Posterior cingulate gyrus (tissue), 11 donors: ENCODE measurements at regions of chr2 and their contacts with region 1.

Region 1: DNA sequence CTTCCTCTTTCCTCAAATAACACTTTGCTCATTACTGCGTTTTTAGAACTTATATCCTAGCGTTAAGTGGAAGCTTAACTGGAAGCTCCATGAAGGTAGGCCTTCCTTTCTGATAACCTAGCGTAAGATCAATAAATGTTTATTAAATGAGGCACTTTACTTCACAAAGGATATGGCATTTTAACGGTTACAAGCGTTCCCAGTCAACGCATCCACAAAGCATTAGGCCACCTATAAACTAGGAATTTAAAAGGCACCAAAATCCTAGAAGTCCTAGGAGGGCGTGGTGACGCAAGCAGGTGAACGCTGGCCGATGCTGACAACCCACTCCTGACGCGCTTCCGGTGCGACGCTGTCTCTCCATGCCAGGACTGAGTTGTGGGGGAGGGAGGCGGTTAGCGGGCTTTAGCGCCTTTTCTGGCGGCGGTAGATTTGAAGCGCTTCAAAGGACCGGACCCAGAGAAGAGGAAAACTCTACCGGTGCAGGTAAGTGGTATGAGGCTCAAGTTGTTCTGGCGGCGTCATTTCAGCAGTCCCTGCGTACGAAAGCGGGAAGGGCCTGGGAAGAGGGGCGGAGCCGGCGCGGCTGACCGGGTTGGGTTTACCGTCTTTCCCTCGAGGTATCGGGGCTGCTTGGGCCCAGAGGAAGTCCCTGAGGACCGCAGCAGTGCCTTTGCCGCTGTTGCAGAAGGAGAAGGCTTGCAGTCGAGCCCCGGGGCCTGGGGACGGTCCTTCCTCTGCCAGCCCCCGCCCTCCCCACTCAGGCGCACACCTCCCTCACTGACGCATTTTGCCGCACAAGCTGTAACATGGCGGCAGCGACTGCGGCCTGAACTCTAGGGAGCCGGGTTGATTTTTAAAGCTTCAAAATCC is at the start of gene PPIG:
- DNase-seq: peak; percentile 81 to 98 (median 88)

Region 2: GRCh38 chr2:169203928-169204327 is 380.3 kb before region 1 on chr2:
- intact Hi-C with region 1: no loop called
- DNase-seq: no peak

Region 3: GRCh38 chr2:169247211-169247610 is 337.0 kb before region 1 on chr2:
- intact Hi-C with region 1: no loop called
- DNase-seq: no peak

Region 4: GRCh38 chr2:169694113-169694903 is 110.1 kb after region 1 on chr2 and contains the starts of genes CFAP210 and PHOSPHO2:
- intact Hi-C with region 1: loop called (anchors 10 kb)
- DNase-seq: peak; percentile 98 to 100 (median 99)